ENCODE measurements at regions of chr12 and their contacts with region 1.

Region 1: GRCh38 chr12:48189331-48190125 is 6.1 kb downstream of the CCDC184 start:
- DNase-seq: peak; percentile 38
- ATAC-seq: peak; percentile 84
- H3K4me3 Mint-ChIP-seq: no peak overlapping the region
- H3K27ac Mint-ChIP-seq: no peak overlapping the region
- H3K4me1 Mint-ChIP-seq: peaks cover 17% of the 10 kb centered on the region
- H3K27me3 Mint-ChIP-seq: peaks cover 23% of the 10 kb centered on the region
- CTCF ChIP-seq: no peak

Region 2: GRCh38 chr12:47941851-47942601 is 247.5 kb before region 1 on chr12:
- CTCF ChIA-PET with region 1: no interaction called
- POLR2A ChIA-PET with region 1: no interaction called
- intact Hi-C with region 1: loop called (anchors 1 kb)
- DNase-seq: peak; percentile 25
- ATAC-seq: peak; percentile 56
- H3K4me3 Mint-ChIP-seq: no peak overlapping the region
- H3K27ac Mint-ChIP-seq: no peak overlapping the region
- H3K4me1 Mint-ChIP-seq: no peaks in the 10 kb centered on the region
- H3K27me3 Mint-ChIP-seq: peaks cover 16% of the 10 kb centered on the region
- CTCF ChIP-seq: no peak

Region 3: DNA sequence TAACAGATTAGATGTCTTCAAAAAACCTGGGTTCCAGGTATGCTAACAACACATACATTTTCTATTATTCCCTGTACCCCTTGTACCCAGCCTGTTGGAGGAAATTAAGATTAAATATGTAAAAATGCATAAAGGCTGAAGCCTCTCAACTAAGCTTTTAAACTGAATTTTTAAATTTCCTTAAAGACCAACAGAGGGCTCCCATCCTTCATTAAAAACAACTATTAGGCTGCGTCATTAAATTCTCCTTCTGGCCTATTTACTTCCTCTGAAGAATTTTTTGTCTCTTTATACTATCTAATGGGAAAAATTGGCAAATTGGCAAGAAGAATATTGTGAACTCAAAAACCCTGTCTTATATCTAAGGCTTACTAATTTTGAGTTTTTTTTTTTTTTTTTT is 105.5 kb before region 1 on chr12:
- CTCF ChIA-PET with region 1: interaction called, 7 read pairs
- POLR2A ChIA-PET with region 1: no interaction called
- intact Hi-C with region 1: loop called (anchors 1 kb)
- DNase-seq: no peak
- ATAC-seq: peak; percentile 28
- H3K4me3 Mint-ChIP-seq: no peak overlapping the region
- H3K27ac Mint-ChIP-seq: no peak overlapping the region
- H3K4me1 Mint-ChIP-seq: peaks cover 11% of the 10 kb centered on the region
- H3K27me3 Mint-ChIP-seq: no peaks in the 10 kb centered on the region
- CTCF ChIP-seq: no peak

Region 4: DNA sequence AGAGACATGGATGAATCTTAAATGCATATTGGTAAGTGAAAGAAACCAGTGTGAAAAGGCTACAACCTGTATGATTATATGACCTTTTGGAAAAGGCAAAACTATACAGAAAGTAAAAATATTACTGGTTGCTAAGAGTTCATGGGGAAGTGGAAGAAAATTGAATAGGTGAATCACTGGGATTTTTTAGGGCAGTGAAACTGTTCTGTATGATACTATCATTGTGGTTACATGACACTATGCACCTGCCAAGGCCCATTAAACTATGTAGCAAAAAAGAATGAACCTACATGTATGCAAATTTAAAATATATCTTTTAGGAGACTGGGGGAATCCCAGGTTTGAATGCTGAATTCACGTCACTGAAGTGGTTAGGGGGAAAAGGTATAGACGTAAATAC is 323.3 kb after region 1 on chr12:
- CTCF ChIA-PET with region 1: no interaction called
- POLR2A ChIA-PET with region 1: no interaction called
- intact Hi-C with region 1: no loop called
- DNase-seq: no peak
- ATAC-seq: peak; percentile 40
- H3K4me3 Mint-ChIP-seq: no peak overlapping the region
- H3K27ac Mint-ChIP-seq: no peak overlapping the region
- H3K4me1 Mint-ChIP-seq: peaks cover 3% of the 10 kb centered on the region
- H3K27me3 Mint-ChIP-seq: no peaks in the 10 kb centered on the region
- CTCF ChIP-seq: no peak

Region 5: GRCh38 chr12:48651681-48652080 is 462.2 kb after region 1 on chr12:
- CTCF ChIA-PET with region 1: no interaction called
- POLR2A ChIA-PET with region 1: no interaction called
- intact Hi-C with region 1: no loop called
- DNase-seq: no peak
- ATAC-seq: no peak
- H3K4me3 Mint-ChIP-seq: no peak overlapping the region
- H3K27ac Mint-ChIP-seq: no peak overlapping the region
- H3K4me1 Mint-ChIP-seq: no peaks in the 10 kb centered on the region
- H3K27me3 Mint-ChIP-seq: no peaks in the 10 kb centered on the region
- CTCF ChIP-seq: no peak

Measured in activated B cell treated with CpG ODN at 0.5 μM for 24 hours (primary cell).